PC-9 (cell line): ENCODE measurements at regions of chr7 and their contacts with region 1.

Region 1: GRCh38 chr7:27739909-27740448 is at the start of gene TAX1BP1:
- DNase-seq: peak; percentile 91 to 96
- H3K4me3 ChIP-seq: peak within 1 kb of the TSS; percentile 84
- H3K27ac ChIP-seq: peak within 1 kb of the TSS; percentile 84
- H3K4me1 ChIP-seq: peaks cover 70% of the 10 kb centered on the region
- H3K27me3 ChIP-seq: no peaks in the 10 kb centered on the region
- CTCF ChIP-seq: no peak
- total RNA-seq, gene TAX1BP1: 143 and 174 TPM in 2 replicates

Region 2: GRCh38 chr7:27025270-27025669 is 714.7 kb before region 1 on chr7:
- CTCF ChIA-PET with region 1: no interaction called
- POLR2A ChIA-PET with region 1: interaction called, 11 read pairs
- intact Hi-C with region 1: no loop called
- DNase-seq: peak; percentile 45 to 52
- H3K4me3 ChIP-seq: no peak overlapping the region
- H3K27ac ChIP-seq: no peak overlapping the region
- H3K4me1 ChIP-seq: peaks cover 10% of the 10 kb centered on the region
- H3K27me3 ChIP-seq: no peaks in the 10 kb centered on the region
- CTCF ChIP-seq: no peak

Region 3: GRCh38 chr7:27196287-27196767 is 543.7 kb before region 1 on chr7:
- CTCF ChIA-PET with region 1: interaction called, 3 read pairs
- POLR2A ChIA-PET with region 1: interaction called, 8 read pairs
- intact Hi-C with region 1: loop called (anchors 10 kb)
- DNase-seq: peak; percentile 59 to 76
- H3K4me3 ChIP-seq: no peak overlapping the region
- H3K27ac ChIP-seq: no peak overlapping the region
- H3K4me1 ChIP-seq: no peaks in the 10 kb centered on the region
- H3K27me3 ChIP-seq: peaks cover 13% of the 10 kb centered on the region; the same call in 1 of the 2 replicates
- CTCF ChIP-seq: peak; percentile 99

Region 4: GRCh38 chr7:27662490-27663205 is 77.3 kb before region 1 on chr7 and contains the start of gene HIBADH:
- CTCF ChIA-PET with region 1: interaction called, 3 read pairs
- POLR2A ChIA-PET with region 1: interaction called, 13 read pairs
- intact Hi-C with region 1: loop called (anchors 1 kb)
- DNase-seq: peak; percentile 99
- H3K4me3 ChIP-seq: peak within 1 kb of the TSS; percentile 79
- H3K27ac ChIP-seq: peak within 1 kb of the TSS; percentile 64
- H3K4me1 ChIP-seq: peaks cover 22% of the 10 kb centered on the region
- H3K27me3 ChIP-seq: no peaks in the 10 kb centered on the region
- CTCF ChIP-seq: no peak; the same call in 1 of the 2 replicates
- total RNA-seq, gene HIBADH: 72.4 and 73.9 TPM in 2 replicates

Region 5: GRCh38 chr7:27697861-27698430 is 42.0 kb before region 1 on chr7:
- CTCF ChIA-PET with region 1: no interaction called
- POLR2A ChIA-PET with region 1: interaction called, 11 read pairs
- intact Hi-C with region 1: no loop called
- DNase-seq: peak; percentile 37 to 91
- H3K4me3 ChIP-seq: no peak overlapping the region
- H3K27ac ChIP-seq: peak overlapping the region; percentile 52
- H3K4me1 ChIP-seq: peaks cover 22% of the 10 kb centered on the region
- H3K27me3 ChIP-seq: no peaks in the 10 kb centered on the region
- CTCF ChIP-seq: no peak

Region 6: DNA sequence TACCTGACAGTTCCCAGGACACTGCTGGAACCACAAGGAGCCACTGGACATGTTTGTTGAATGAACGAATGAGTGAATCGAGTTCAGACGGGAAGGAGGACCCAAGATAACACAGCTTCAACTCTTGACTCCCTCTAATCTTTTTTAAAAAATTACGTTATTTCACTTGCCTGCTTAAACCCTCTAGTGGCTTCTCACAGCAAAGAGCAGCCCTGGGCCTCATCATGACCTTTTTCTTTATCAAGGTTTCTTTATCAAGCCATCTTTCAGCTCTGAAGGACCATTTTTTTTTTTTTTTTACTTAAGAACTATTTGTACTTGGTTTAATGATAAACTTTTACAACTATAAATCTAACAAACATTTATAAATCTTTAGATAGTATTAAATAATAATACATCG is 110.6 kb after region 1 on chr7:
- CTCF ChIA-PET with region 1: no interaction called
- POLR2A ChIA-PET with region 1: no interaction called
- intact Hi-C with region 1: no loop called
- DNase-seq: no peak
- H3K4me3 ChIP-seq: no peak overlapping the region
- H3K27ac ChIP-seq: no peak overlapping the region
- H3K4me1 ChIP-seq: no peaks in the 10 kb centered on the region
- H3K27me3 ChIP-seq: no peaks in the 10 kb centered on the region
- CTCF ChIP-seq: no peak